Activated CD8-positive, alpha-beta T cell treated with anti-CD3 and anti-CD28 coated beads for 36 hours (primary cell): ENCODE measurements at regions of chr21 and their contacts with region 1.

Region 1: GRCh38 chr21:35840197-35840799 is 220.0 kb downstream of the SETD4 start:
- DNase-seq: peak; percentile 77
- ATAC-seq: no peak
- H3K4me3 Mint-ChIP-seq: no peak overlapping the region
- H3K27ac Mint-ChIP-seq: no peak overlapping the region
- H3K4me1 Mint-ChIP-seq: no peaks in the 10 kb centered on the region
- H3K27me3 Mint-ChIP-seq: no peaks in the 10 kb centered on the region
- CTCF ChIP-seq: peak; percentile 91

Region 2: GRCh38 chr21:35400233-35400957 is 439.9 kb before region 1 on chr21:
- CTCF ChIA-PET with region 1: interaction called, 14 read pairs
- POLR2A ChIA-PET with region 1: no interaction called
- intact Hi-C with region 1: no loop called
- DNase-seq: peak; percentile 43
- ATAC-seq: peak; percentile 93
- H3K4me3 Mint-ChIP-seq: no peak overlapping the region
- H3K27ac Mint-ChIP-seq: no peak overlapping the region
- H3K4me1 Mint-ChIP-seq: peaks cover 15% of the 10 kb centered on the region
- H3K27me3 Mint-ChIP-seq: peaks cover 1% of the 10 kb centered on the region
- CTCF ChIP-seq: peak; percentile 73

Region 3: DNA sequence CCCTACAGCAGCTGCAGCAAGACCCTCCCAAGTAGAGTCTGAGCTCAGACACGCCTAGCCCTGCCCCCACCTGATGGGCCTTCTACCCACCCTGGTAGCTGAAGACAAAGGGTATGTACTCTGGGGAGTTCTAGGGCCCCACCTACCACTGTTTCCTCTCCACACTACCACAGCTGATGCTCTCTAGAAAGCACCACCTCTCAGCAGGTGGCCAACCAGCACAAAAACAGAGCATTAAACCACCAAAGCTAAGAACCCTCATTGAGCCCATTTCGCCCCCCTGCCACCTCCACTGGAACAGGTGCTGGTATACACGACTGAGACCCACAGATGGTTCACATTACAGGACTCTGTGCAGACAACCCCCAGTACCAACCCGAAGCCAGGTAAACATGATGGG is 38.9 kb before region 1 on chr21:
- CTCF ChIA-PET with region 1: no interaction called
- POLR2A ChIA-PET with region 1: no interaction called
- intact Hi-C with region 1: no loop called
- DNase-seq: no peak
- ATAC-seq: no peak
- H3K4me3 Mint-ChIP-seq: no peak overlapping the region
- H3K27ac Mint-ChIP-seq: no peak overlapping the region
- H3K4me1 Mint-ChIP-seq: peaks cover 3% of the 10 kb centered on the region
- H3K27me3 Mint-ChIP-seq: no peaks in the 10 kb centered on the region
- CTCF ChIP-seq: no peak

Region 4: GRCh38 chr21:35829067-35829466 is 11.2 kb before region 1 on chr21:
- CTCF ChIA-PET with region 1: interaction called, 18 read pairs
- POLR2A ChIA-PET with region 1: interaction called, 3 read pairs
- intact Hi-C with region 1: no loop called
- DNase-seq: no peak
- ATAC-seq: no peak
- H3K4me3 Mint-ChIP-seq: no peak overlapping the region
- H3K27ac Mint-ChIP-seq: no peak overlapping the region
- H3K4me1 Mint-ChIP-seq: peaks cover under 1% of the 10 kb centered on the region
- H3K27me3 Mint-ChIP-seq: peaks cover 17% of the 10 kb centered on the region
- CTCF ChIP-seq: no peak